GM18951 (cell line): ENCODE measurements at regions of chr17 and their contacts with region 1.

Region 1: GRCh38 chr17:82781894-82782274 is 30.0 kb downstream of the TBCD start:
- POLR2A ChIP-seq: no peak

Region 2: DNA sequence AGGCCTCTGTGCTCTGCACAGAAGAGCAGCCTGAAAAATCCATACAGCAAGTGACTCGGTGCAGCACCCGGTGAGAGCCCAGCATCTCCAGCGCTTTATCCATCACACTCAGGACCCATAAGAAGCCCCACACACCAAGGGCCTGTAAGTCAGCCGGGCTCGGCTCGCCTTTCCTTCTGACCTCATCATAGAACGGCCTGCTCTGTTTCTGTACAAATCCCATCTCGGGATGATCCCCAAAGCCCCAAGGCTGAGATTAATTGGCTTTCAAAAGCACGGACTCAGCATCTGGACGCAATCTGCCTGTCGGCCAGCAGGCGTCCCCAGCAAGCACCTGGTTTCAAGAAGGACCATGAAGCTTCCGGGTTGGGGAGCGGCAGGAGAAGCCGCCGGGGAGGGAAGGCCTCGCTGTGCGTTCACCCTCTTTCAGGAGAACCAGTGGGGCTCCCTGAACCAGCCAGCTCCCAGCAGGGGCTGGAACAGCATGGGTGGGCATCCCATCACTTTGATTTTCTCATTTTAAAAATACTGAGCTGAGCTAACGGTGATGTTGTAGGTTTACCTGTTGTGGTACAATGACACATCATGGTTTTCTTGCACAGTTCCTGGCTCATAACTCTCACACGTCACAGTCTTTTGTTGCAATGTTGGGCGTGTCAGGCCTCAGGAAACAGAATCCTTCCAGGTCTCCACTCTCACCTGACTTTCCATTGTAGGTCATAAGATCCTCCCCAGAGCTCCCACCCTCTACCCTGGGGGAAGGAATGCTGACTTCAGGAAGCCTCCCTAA is 576.0 kb before region 1 on chr17:
- in situ Hi-C with region 1: no loop called
- POLR2A ChIP-seq: peak; percentile 81

Region 3: GRCh38 chr17:82924798-82925197 is 142.9 kb after region 1 on chr17:
- in situ Hi-C with region 1: loop called (anchors 10 kb)
- POLR2A ChIP-seq: no peak

Region 4: GRCh38 chr17:82956726-82957463 is 175.0 kb after region 1 on chr17:
- in situ Hi-C with region 1: loop called (anchors 10 kb)
- POLR2A ChIP-seq: no peak

Region 5: GRCh38 chr17:83079352-83079747 is 297.5 kb after region 1 on chr17 and contains the start of gene METRNL:
- in situ Hi-C with region 1: no loop called
- POLR2A ChIP-seq: peak; percentile 60